ENCODE measurements at regions of chr3 and their contacts with region 1.

Region 1: GRCh38 chr3:108477511-108478147 is 32.8 kb downstream of the MYH15 start:
- DNase-seq: peak; percentile 68
- ATAC-seq: peak; percentile 95
- H3K4me3 Mint-ChIP-seq: no peak overlapping the region
- H3K27ac Mint-ChIP-seq: no peak overlapping the region
- H3K4me1 Mint-ChIP-seq: no peaks in the 10 kb centered on the region
- H3K27me3 Mint-ChIP-seq: no peaks in the 10 kb centered on the region
- CTCF ChIP-seq: peak; percentile 61

Region 2: DNA sequence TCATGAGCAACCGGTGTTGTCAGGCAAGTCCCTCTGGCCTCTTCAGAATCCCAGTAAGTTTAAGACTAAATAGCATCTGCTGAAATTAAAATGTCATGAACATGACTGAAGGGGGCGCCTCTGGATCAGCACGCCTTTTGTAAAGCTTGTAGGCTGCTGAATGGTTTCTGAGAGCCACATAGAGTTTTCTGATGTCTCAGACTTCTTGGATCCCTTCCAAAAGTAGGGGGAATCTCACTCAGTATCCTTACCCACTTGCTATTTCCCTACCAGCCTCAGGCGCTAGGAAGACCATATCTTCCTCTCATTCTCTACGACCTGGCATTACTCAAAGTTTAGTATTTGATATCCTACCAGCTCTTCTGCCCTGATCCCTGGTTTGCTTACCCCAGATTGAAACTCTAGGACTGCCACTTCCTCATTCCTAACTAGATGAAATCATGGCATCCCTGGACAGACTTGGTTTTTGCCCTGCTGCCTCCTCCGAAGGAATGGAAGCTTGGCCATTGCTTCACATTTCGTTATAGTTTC is 324.1 kb before region 1 on chr3:
- CTCF ChIA-PET with region 1: interaction called, 44 read pairs
- POLR2A ChIA-PET with region 1: no interaction called
- intact Hi-C with region 1: loop called (anchors 1 kb)
- DNase-seq: peak; percentile 74
- ATAC-seq: peak; percentile 71
- H3K4me3 Mint-ChIP-seq: no peak overlapping the region
- H3K27ac Mint-ChIP-seq: no peak overlapping the region
- H3K4me1 Mint-ChIP-seq: peaks cover 16% of the 10 kb centered on the region
- H3K27me3 Mint-ChIP-seq: no peaks in the 10 kb centered on the region
- CTCF ChIP-seq: peak; percentile 51

Region 3: GRCh38 chr3:108159105-108159504 is 318.5 kb before region 1 on chr3:
- CTCF ChIA-PET with region 1: interaction called, 44 read pairs
- POLR2A ChIA-PET with region 1: no interaction called
- intact Hi-C with region 1: no loop called
- DNase-seq: no peak
- ATAC-seq: no peak
- H3K4me3 Mint-ChIP-seq: no peak overlapping the region
- H3K27ac Mint-ChIP-seq: no peak overlapping the region
- H3K4me1 Mint-ChIP-seq: peaks cover 8% of the 10 kb centered on the region
- H3K27me3 Mint-ChIP-seq: no peaks in the 10 kb centered on the region
- CTCF ChIP-seq: no peak

Region 4: GRCh38 chr3:108221911-108222852 is 255.4 kb before region 1 on chr3 and contains the start of gene IFT57:
- CTCF ChIA-PET with region 1: interaction called, 13 read pairs
- POLR2A ChIA-PET with region 1: no interaction called
- intact Hi-C with region 1: loop called (anchors 5 kb)
- DNase-seq: peak; percentile 97
- ATAC-seq: peak; percentile 93
- H3K4me3 Mint-ChIP-seq: peak within 1 kb of the TSS; percentile 99
- H3K27ac Mint-ChIP-seq: peak within 1 kb of the TSS; percentile 99
- H3K4me1 Mint-ChIP-seq: peaks cover 45% of the 10 kb centered on the region
- H3K27me3 Mint-ChIP-seq: no peaks in the 10 kb centered on the region
- CTCF ChIP-seq: no peak
- total RNA-seq, gene IFT57: 30.9 to 35.3 TPM

Region 5: DNA sequence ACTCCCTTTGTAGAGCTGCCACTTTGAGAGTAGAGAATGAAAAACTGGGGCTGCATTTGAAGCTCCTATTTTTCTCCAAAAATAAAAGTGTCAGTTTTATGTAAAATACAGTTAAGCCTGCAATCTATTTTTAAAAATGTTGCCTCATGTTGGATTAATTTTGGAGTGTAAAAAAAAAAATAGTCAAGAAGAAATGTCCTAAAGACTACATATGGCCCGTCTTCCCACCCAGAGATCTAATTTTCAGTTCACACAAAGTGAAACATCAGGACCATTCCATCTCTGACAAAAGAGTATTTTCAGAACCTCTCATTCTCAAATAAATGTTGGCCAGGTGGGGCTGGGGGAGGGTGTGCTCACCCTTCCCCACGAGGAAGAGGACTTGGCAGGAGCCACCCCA is 118.6 kb before region 1 on chr3:
- CTCF ChIA-PET with region 1: no interaction called
- POLR2A ChIA-PET with region 1: no interaction called
- intact Hi-C with region 1: loop called (anchors 10 kb)
- DNase-seq: no peak
- ATAC-seq: no peak
- H3K4me3 Mint-ChIP-seq: no peak overlapping the region
- H3K27ac Mint-ChIP-seq: no peak overlapping the region
- H3K4me1 Mint-ChIP-seq: no peaks in the 10 kb centered on the region
- H3K27me3 Mint-ChIP-seq: peaks cover under 1% of the 10 kb centered on the region
- CTCF ChIP-seq: no peak

Region 6: DNA sequence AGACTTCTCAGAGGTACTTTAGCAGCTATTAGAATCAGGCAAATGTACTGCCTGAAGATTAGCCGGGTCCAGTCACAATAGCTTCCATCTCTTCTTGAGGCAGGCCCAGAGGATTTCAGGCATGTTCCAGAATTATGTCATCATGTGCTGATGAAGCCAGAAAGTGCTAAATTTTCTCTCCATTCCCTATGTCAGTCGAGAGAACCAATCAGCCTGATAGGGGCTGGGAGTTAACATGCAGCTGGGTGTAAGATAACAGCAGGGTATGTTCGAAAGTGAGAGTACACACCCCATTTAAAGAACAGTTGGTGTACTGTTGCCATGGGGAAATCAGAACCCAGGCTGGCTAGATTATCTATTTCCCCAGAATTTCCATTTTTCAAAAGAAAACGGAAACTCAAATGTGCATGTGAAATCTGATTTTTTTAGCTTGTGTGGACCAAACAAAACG is 15.9 kb before region 1 on chr3:
- CTCF ChIA-PET with region 1: interaction called, 36 read pairs
- POLR2A ChIA-PET with region 1: no interaction called
- intact Hi-C with region 1: no loop called
- DNase-seq: no peak
- ATAC-seq: no peak
- H3K4me3 Mint-ChIP-seq: no peak overlapping the region
- H3K27ac Mint-ChIP-seq: no peak overlapping the region
- H3K4me1 Mint-ChIP-seq: no peaks in the 10 kb centered on the region
- H3K27me3 Mint-ChIP-seq: peaks cover 1% of the 10 kb centered on the region
- CTCF ChIP-seq: no peak

Region 7: GRCh38 chr3:108489771-108490170 is 12.1 kb after region 1 on chr3:
- CTCF ChIA-PET with region 1: interaction called, 69 read pairs
- POLR2A ChIA-PET with region 1: no interaction called
- intact Hi-C with region 1: no loop called
- DNase-seq: peak; percentile 56
- ATAC-seq: peak; percentile 79
- H3K4me3 Mint-ChIP-seq: no peak overlapping the region
- H3K27ac Mint-ChIP-seq: no peak overlapping the region
- H3K4me1 Mint-ChIP-seq: peaks cover 4% of the 10 kb centered on the region
- H3K27me3 Mint-ChIP-seq: no peaks in the 10 kb centered on the region
- CTCF ChIP-seq: peak; percentile 84

Region 8: GRCh38 chr3:108804437-108804836 is 326.8 kb after region 1 on chr3:
- CTCF ChIA-PET with region 1: no interaction called
- POLR2A ChIA-PET with region 1: no interaction called
- intact Hi-C with region 1: no loop called
- DNase-seq: no peak
- ATAC-seq: no peak
- H3K4me3 Mint-ChIP-seq: no peak overlapping the region
- H3K27ac Mint-ChIP-seq: peak overlapping the region; percentile 9
- H3K4me1 Mint-ChIP-seq: peaks cover 20% of the 10 kb centered on the region
- H3K27me3 Mint-ChIP-seq: no peaks in the 10 kb centered on the region
- CTCF ChIP-seq: no peak